ENCODE measurements at regions of chr4 and their contacts with region 1.

Region 1: GRCh38 chr4:146049802-146050201 is 111.2 kb upstream of the ZNF827 start:
- DNase-seq: no peak
- H3K4me3 ChIP-seq: no peak overlapping the region
- H3K27ac ChIP-seq: no peak overlapping the region
- H3K4me1 ChIP-seq: peaks cover 15% of the 10 kb centered on the region
- H3K27me3 ChIP-seq: no peaks in the 10 kb centered on the region
- CTCF ChIP-seq: no peak

Region 2: DNA sequence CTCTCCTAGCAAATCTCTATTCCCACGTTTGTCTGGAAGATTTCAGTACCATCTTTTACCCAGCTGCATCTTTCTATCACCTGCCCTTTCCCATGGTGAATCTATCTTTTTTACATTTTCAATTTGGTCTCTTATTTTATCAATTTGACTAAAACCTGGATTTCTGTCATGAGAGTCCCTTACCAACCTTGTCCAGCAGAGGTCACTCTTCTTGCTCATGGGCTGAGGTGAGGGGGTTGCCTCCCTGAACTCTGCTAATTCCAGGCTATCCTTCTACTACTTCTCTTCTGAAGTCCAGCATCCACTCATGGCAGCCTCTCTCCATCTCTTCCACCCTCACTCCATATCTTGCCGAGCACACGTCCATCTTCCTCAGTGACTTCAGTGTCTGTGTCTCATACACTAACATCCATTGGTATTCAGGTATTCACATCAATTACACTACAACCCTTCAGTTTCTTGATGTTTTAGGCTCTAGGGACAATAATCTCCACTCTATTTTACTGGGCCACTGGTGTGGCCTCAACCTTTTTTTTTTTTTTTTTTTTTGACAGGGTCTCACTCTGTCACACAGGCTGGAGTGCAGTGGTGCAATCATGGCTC is 93.4 kb before region 1 on chr4:
- CTCF ChIA-PET with region 1: no interaction called
- dilution Hi-C with region 1: no loop called
- in situ Hi-C with region 1: no loop called
- intact Hi-C with region 1: loop called (anchors 10 kb)
- DNase-seq: peak; percentile 25
- H3K4me3 ChIP-seq: no peak overlapping the region
- H3K27ac ChIP-seq: no peak overlapping the region
- H3K4me1 ChIP-seq: peaks cover 27% of the 10 kb centered on the region
- H3K27me3 ChIP-seq: no peaks in the 10 kb centered on the region
- CTCF ChIP-seq: peak; percentile 71 to 76

Region 3: DNA sequence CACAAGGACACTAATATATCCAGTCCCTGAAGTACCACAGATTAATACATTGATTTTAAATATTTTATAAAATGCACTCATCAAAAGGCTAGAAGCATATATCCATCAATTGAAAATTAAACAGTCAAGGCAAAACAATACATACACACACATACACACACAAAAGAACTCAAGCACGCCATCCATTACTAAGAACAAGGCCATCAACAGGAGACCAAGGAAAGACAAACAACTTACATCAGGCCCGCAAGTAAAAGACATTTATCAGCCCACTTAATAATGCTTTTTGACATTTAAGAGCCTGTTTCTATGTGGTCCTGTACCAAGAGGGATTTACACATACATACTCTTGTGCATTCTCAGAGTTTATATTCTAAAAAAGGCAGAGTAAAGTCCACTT is 61.2 kb before region 1 on chr4:
- CTCF ChIA-PET with region 1: no interaction called
- dilution Hi-C with region 1: loop called (anchors 5 kb)
- in situ Hi-C with region 1: no loop called
- intact Hi-C with region 1: no loop called
- DNase-seq: no peak
- H3K4me3 ChIP-seq: no peak overlapping the region
- H3K27ac ChIP-seq: no peak overlapping the region
- H3K4me1 ChIP-seq: no peaks in the 10 kb centered on the region
- H3K27me3 ChIP-seq: peaks cover 2% of the 10 kb centered on the region
- CTCF ChIP-seq: no peak